GM12878 (cell line): ENCODE measurements at regions of chr1 and their contacts with region 1.

Region 1: GRCh38 chr1:182604169-182605164 is at the start of gene RGS16:
- DNase-seq: peak; percentile 61
- ATAC-seq: peak; percentile 91
- H3K4me3 ChIP-seq: peak within 1 kb of the TSS; percentile 85
- H3K27ac ChIP-seq: peak within 1 kb of the TSS; percentile 54
- H3K4me1 ChIP-seq: peaks cover 25% of the 10 kb centered on the region
- H3K27me3 ChIP-seq: no peaks in the 10 kb centered on the region
- CTCF ChIP-seq: no peak
- EP300 ChIP-seq: 0 out of 4 replicates have a peak, but pooled peaks of 1 of the 2 experiments have one; percentile 16
- POLR2A ChIP-seq: peak; percentile 100
- RAD21 ChIP-seq: no peak
- polyA plus RNA-seq, gene RGS16: 16.4 to 18.5 TPM

Region 2: GRCh38 chr1:182460550-182460951 is 143.9 kb before region 1 on chr1:
- CTCF ChIA-PET with region 1: no interaction called
- POLR2A ChIA-PET with region 1: no interaction called
- RAD21 ChIA-PET with region 1: no interaction called
- SMC1A ChIA-PET with region 1: no interaction called
- in situ Hi-C with region 1: no loop called
- intact Hi-C with region 1: no loop called
- DNase-seq: no peak
- ATAC-seq: no peak
- H3K4me3 ChIP-seq: no peak overlapping the region
- H3K27ac ChIP-seq: no peak overlapping the region
- H3K4me1 ChIP-seq: no peaks in the 10 kb centered on the region
- H3K27me3 ChIP-seq: no peaks in the 10 kb centered on the region
- CTCF ChIP-seq: no peak
- EP300 ChIP-seq: no peak
- POLR2A ChIP-seq: no peak
- RAD21 ChIP-seq: no peak

Region 3: GRCh38 chr1:182575539-182576149 is 28.8 kb before region 1 on chr1:
- CTCF ChIA-PET with region 1: no interaction called
- POLR2A ChIA-PET with region 1: no interaction called
- RAD21 ChIA-PET with region 1: no interaction called
- SMC1A ChIA-PET with region 1: no interaction called
- in situ Hi-C with region 1: no loop called
- intact Hi-C with region 1: no loop called
- DNase-seq: no peak
- ATAC-seq: no peak
- H3K4me3 ChIP-seq: no peak overlapping the region
- H3K27ac ChIP-seq: no peak overlapping the region
- H3K4me1 ChIP-seq: no peaks in the 10 kb centered on the region
- H3K27me3 ChIP-seq: no peaks in the 10 kb centered on the region
- CTCF ChIP-seq: no peak
- EP300 ChIP-seq: no peak
- POLR2A ChIP-seq: no peak
- RAD21 ChIP-seq: no peak

Region 4: GRCh38 chr1:182614796-182615454 is 10.5 kb after region 1 on chr1:
- CTCF ChIA-PET with region 1: interaction called, 119 read pairs
- POLR2A ChIA-PET with region 1: interaction called, 24 read pairs
- RAD21 ChIA-PET with region 1: interaction called, 121 read pairs
- SMC1A ChIA-PET with region 1: interaction called, 219 read pairs
- in situ Hi-C with region 1: no loop called
- intact Hi-C with region 1: loop called (anchors 1 kb)
- DNase-seq: no peak
- ATAC-seq: peak; percentile 62
- H3K4me3 ChIP-seq: peak overlapping the region; percentile 63
- H3K27ac ChIP-seq: peak overlapping the region; percentile 95
- H3K4me1 ChIP-seq: peaks cover 66% of the 10 kb centered on the region
- H3K27me3 ChIP-seq: no peaks in the 10 kb centered on the region
- CTCF ChIP-seq: no peak
- EP300 ChIP-seq: peak in 1 of 2 experiments; percentile 54; a peak in 3 of 4 replicates
- POLR2A ChIP-seq: peak; percentile 84
- RAD21 ChIP-seq: peak; percentile 12; the same call in 1 of the 2 replicates

Region 5: GRCh38 chr1:182629499-182630096 is 25.1 kb after region 1 on chr1:
- CTCF ChIA-PET with region 1: interaction called, 31 read pairs
- POLR2A ChIA-PET with region 1: interaction called, 7 read pairs
- RAD21 ChIA-PET with region 1: interaction called, 23 read pairs
- SMC1A ChIA-PET with region 1: interaction called, 238 read pairs
- in situ Hi-C with region 1: no loop called
- intact Hi-C with region 1: no loop called
- DNase-seq: no peak
- ATAC-seq: peak; percentile 88
- H3K4me3 ChIP-seq: no peak overlapping the region
- H3K27ac ChIP-seq: no peak overlapping the region
- H3K4me1 ChIP-seq: peaks cover 52% of the 10 kb centered on the region
- H3K27me3 ChIP-seq: no peaks in the 10 kb centered on the region
- CTCF ChIP-seq: no peak
- EP300 ChIP-seq: peak; percentile 26 to 61; a peak in 2 of 4 replicates
- POLR2A ChIP-seq: no peak
- RAD21 ChIP-seq: no peak

Region 6: GRCh38 chr1:182716740-182717720 is 112.6 kb after region 1 on chr1:
- CTCF ChIA-PET with region 1: interaction called, 7 read pairs
- POLR2A ChIA-PET with region 1: no interaction called
- RAD21 ChIA-PET with region 1: interaction called, 4 read pairs
- SMC1A ChIA-PET with region 1: interaction called, 5 read pairs
- in situ Hi-C with region 1: no loop called
- intact Hi-C with region 1: loop called (anchors 5 kb)
- DNase-seq: peak; percentile 16
- ATAC-seq: peak; percentile 62
- H3K4me3 ChIP-seq: no peak overlapping the region
- H3K27ac ChIP-seq: no peak overlapping the region
- H3K4me1 ChIP-seq: peaks cover 3% of the 10 kb centered on the region
- H3K27me3 ChIP-seq: no peaks in the 10 kb centered on the region
- CTCF ChIP-seq: no peak
- EP300 ChIP-seq: no peak
- POLR2A ChIP-seq: no peak
- RAD21 ChIP-seq: no peak

Region 7: DNA sequence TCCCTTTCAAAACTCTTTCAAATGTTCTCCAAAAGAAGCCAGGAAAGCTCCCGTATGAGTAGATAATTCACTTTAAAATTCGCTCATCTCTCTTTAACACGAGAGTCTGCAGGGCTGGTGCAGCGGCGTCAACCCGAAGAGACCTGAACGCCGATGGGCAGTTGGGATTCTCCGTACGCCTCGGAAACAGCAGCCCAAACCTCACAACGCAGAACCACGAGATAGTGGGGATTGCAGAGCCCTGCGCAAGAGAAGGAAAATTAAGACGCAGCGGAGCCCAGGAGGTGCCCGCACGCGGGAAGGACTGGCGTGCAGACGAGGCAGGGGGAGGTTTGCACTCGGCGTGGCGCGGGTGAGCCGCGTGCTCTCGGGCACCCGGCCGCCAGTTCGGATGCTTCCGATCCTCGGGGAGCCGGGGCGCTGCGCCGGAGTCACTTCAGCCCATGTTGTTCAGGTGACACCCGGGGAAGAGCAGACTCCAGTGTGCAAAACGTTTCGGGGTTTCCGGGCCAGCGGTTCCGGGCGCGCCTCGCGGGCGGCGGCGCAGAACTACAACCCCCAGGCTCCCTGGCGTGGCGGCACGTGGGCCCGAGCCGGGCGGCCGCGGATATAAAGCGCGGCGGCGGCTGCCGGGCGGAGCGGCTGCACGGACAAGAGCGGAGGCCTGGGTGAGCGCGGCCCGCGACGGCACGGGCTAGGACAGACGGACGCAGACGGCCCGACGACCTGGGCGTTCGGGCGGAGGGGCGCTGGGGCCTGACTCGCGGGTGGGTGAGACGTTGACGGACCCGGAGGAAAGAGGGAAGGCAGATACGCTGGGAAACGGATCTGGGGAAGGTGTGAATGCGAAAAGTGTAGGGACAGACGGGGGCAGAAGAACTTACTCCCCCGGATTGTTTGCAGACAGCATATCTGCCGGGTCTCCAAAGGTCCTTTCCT is 184.9 kb after region 1 on chr1 and contains the start of gene NPL:
- CTCF ChIA-PET with region 1: interaction called, 1,888 read pairs
- POLR2A ChIA-PET with region 1: interaction called, 6 read pairs
- RAD21 ChIA-PET with region 1: interaction called, 946 read pairs
- SMC1A ChIA-PET with region 1: interaction called, 1,145 read pairs
- in situ Hi-C with region 1: loop called (anchors 5 kb)
- intact Hi-C with region 1: no loop called
- DNase-seq: peak; percentile 34
- ATAC-seq: peak; percentile 97
- H3K4me3 ChIP-seq: peak within 1 kb of the TSS; percentile 59
- H3K27ac ChIP-seq: no peak within 1 kb of the TSS
- H3K4me1 ChIP-seq: peaks cover 7% of the 10 kb centered on the region; the same call in 1 of the 2 replicates
- H3K27me3 ChIP-seq: no peaks in the 10 kb centered on the region
- CTCF ChIP-seq: no peak
- EP300 ChIP-seq: no peak
- POLR2A ChIP-seq: peak; percentile 99
- RAD21 ChIP-seq: no peak
- polyA plus RNA-seq, gene NPL: 12.6 to 15.1 TPM

Region 8: GRCh38 chr1:183023601-183024316 is 419.3 kb after region 1 on chr1:
- CTCF ChIA-PET with region 1: no interaction called
- POLR2A ChIA-PET with region 1: no interaction called
- RAD21 ChIA-PET with region 1: no interaction called
- SMC1A ChIA-PET with region 1: no interaction called
- in situ Hi-C with region 1: no loop called
- intact Hi-C with region 1: no loop called
- DNase-seq: no peak
- ATAC-seq: peak; percentile 77
- H3K4me3 ChIP-seq: peak overlapping the region; percentile 74
- H3K27ac ChIP-seq: peak overlapping the region; percentile 5
- H3K4me1 ChIP-seq: peaks cover 20% of the 10 kb centered on the region
- H3K27me3 ChIP-seq: no peaks in the 10 kb centered on the region
- CTCF ChIP-seq: peak; percentile 64 to 76 (median 68)
- EP300 ChIP-seq: no peak
- POLR2A ChIP-seq: peak; percentile 65
- RAD21 ChIP-seq: peak; percentile 47; the same call in 1 of the 2 replicates